ENCODE measurements at regions of chr14 and their contacts with region 1.

Region 1: GRCh38 chr14:64387694-64388532 is at the start of gene MTHFD1:
- DNase-seq: peak; percentile 99
- ATAC-seq: peak; percentile 95
- H3K4me3 Mint-ChIP-seq: peak within 1 kb of the TSS; percentile 93
- H3K27ac Mint-ChIP-seq: peak within 1 kb of the TSS; percentile 93
- H3K4me1 Mint-ChIP-seq: peaks cover 34% of the 10 kb centered on the region
- H3K27me3 Mint-ChIP-seq: no peaks in the 10 kb centered on the region
- total RNA-seq, gene MTHFD1: 213 to 222 TPM

Region 2: GRCh38 chr14:63543000-63543825 is 844.7 kb before region 1 on chr14 and contains the start of gene PPP2R5E:
- CTCF ChIA-PET with region 1: no interaction called
- POLR2A ChIA-PET with region 1: interaction called, 5 read pairs
- intact Hi-C with region 1: loop called in 1 of 2 experiments (anchors 5 kb)
- DNase-seq: peak; percentile 98
- ATAC-seq: peak; percentile 99
- H3K4me3 Mint-ChIP-seq: peak within 1 kb of the TSS; percentile 86
- H3K27ac Mint-ChIP-seq: peak within 1 kb of the TSS; percentile 85
- H3K4me1 Mint-ChIP-seq: peaks cover 26% of the 10 kb centered on the region
- H3K27me3 Mint-ChIP-seq: no peaks in the 10 kb centered on the region
- total RNA-seq, gene PPP2R5E: 38.4 to 40.4 TPM

Region 3: DNA sequence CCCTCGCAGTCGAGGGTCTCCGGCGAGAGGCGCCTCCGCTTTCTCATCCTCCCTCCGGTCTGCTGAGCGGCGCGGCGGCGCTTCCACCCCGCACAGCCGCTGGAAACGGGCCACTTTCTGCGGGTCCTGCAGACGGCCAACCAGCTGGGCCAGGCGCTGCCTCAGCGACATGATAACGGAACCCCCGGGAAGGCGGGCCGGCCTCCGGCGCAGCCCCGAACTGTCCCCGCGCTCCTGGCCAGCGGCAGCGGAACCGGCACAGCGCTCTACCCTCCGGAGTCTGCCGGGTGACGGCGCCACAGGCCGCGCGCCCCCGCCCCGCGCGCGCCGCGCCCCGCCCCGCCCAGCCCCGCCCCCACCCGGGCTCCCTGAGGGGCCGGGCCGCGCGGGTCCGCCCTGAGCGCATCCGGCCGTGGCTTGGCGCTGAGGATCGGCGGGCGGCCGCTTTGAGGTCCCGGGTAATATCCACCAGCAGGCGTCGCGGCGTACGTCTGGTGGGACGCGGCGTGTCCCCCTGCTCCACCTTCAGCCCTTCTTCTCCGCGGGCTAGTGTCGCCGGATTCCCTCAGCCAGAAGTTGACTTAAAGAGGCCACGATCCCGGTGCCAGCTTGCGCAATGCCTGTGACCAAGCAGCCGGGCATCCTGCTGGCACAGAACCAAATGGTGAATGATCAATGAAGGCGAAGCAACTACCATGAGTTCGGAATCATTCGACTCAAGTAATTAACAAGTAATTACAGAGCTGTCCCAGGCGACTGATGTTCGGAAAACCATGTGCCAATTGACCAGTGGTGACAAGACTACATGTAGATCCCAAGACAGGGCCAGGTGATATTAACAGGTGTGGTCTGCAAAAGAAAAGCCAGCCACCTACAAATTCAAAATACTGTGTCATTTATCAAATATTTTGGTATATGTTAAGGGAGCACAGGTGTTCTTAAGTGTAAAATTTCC is 659.9 kb before region 1 on chr14 and contains the start of gene SGPP1:
- CTCF ChIA-PET with region 1: no interaction called
- POLR2A ChIA-PET with region 1: no interaction called
- intact Hi-C with region 1: loop called in 1 of 2 experiments (anchors 5 kb)
- DNase-seq: peak; percentile 87
- ATAC-seq: peak; percentile 91
- H3K4me3 Mint-ChIP-seq: peak within 1 kb of the TSS; percentile 99
- H3K27ac Mint-ChIP-seq: peak within 1 kb of the TSS; percentile 96
- H3K4me1 Mint-ChIP-seq: peaks cover 30% of the 10 kb centered on the region
- H3K27me3 Mint-ChIP-seq: no peaks in the 10 kb centered on the region
- total RNA-seq, gene SGPP1: 8.6 to 10.4 TPM

Region 4: GRCh38 chr14:64400829-64401459 is 13.0 kb after region 1 on chr14:
- CTCF ChIA-PET with region 1: interaction called, 4 read pairs
- POLR2A ChIA-PET with region 1: interaction called, 13 read pairs
- intact Hi-C with region 1: no loop called
- DNase-seq: no peak
- ATAC-seq: no peak
- H3K4me3 Mint-ChIP-seq: no peak overlapping the region
- H3K27ac Mint-ChIP-seq: no peak overlapping the region
- H3K4me1 Mint-ChIP-seq: peaks cover 2% of the 10 kb centered on the region
- H3K27me3 Mint-ChIP-seq: no peaks in the 10 kb centered on the region

Region 5: DNA sequence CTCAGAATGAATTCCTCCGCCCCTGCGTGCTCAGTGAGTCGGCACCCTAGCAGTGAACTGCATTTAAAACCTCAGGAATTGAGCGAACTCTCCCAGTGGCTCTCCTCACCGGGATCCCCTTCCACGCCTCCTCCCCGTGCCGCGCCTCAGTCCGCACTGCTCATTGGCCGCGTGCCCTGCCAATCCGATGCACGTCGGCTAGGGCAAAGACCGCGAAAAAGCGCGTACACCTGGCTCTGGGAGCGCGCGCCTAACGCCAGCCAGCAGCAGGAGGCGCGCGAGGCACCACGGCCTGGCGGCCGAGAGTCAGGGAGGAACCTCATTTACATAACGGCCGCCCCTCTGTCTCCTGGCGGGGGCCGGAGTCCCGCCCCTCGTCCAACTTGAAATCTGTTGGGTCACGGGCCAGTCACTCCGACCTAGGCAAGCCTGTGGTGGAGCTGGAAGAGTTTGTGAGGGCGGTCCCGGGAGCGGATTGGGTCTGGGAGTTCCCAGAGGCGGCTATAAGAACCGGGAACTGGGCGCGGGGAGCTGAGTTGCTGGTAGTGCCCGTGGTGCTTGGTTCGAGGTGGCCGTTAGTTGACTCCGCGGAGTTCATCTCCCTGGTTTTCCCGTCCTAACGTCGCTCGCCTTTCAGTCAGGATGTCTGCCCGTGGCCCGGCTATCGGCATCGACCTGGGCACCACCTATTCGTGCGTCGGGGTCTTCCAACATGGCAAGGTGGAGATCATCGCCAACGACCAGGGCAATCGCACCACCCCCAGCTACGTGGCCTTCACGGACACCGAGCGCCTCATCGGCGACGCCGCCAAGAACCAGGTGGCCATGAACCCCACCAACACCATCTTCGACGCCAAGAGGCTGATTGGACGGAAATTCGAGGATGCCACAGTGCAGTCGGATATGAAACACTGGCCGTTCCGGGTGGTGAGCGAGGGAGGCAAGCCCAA is 152.6 kb after region 1 on chr14 and contains the start of gene HSPA2:
- CTCF ChIA-PET with region 1: no interaction called
- POLR2A ChIA-PET with region 1: interaction called, 9 read pairs
- intact Hi-C with region 1: loop called (anchors 1 kb)
- DNase-seq: peak; percentile 97
- ATAC-seq: peak; percentile 95
- H3K4me3 Mint-ChIP-seq: peak within 1 kb of the TSS; percentile 81
- H3K27ac Mint-ChIP-seq: peak within 1 kb of the TSS; percentile 96
- H3K4me1 Mint-ChIP-seq: peaks cover 28% of the 10 kb centered on the region
- H3K27me3 Mint-ChIP-seq: peaks cover 39% of the 10 kb centered on the region
- total RNA-seq, gene HSPA2: 3.2 to 4.1 TPM

Measured in activated CD4-positive, alpha-beta T cell treated with anti-CD3 and anti-CD28 coated beads for 36 hours (primary cell).